ENCODE measurements at regions of chr20 and their contacts with region 1.

Region 1: GRCh38 chr20:49132995-49133478 is 55.1 kb downstream of the STAU1 start:
- DNase-seq: no peak
- H3K4me3 ChIP-seq: no peak overlapping the region
- H3K27ac ChIP-seq: peak overlapping the region; percentile 42
- H3K4me1 ChIP-seq: peaks cover 6% of the 10 kb centered on the region
- H3K27me3 ChIP-seq: no peaks in the 10 kb centered on the region
- CTCF ChIP-seq: peak in 2 of 3 experiments; percentile 40 to 72
- POLR2A ChIP-seq: no peak

Region 2: DNA sequence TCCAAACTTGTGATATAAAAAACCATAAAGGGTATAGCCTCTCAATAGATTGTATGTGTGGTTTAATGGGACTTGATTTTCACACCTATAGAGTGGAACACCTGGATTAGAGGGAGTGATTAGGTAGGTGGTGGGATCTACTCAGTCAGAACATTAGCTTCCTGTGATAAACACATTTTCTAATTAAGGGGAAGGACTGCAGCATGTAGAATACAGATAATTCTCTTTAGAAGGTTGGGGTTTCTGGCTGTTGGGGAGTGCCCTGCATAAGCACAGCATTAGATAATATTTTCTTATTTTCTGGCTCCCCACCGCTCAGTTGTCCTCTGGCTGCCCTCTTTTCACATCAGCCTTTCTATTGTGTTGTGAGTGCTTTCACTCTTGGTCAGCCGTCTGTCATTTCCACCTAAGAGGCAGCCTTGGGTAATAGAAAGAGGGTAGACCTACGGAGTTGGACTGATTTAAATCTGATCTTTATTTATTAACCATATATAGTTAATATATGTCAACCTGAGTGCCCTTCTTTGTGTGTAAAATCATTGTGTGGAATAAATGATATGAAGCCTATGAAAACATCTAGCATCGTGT is 78.9 kb before region 1 on chr20:
- intact Hi-C with region 1: no loop called
- DNase-seq: no peak
- H3K4me3 ChIP-seq: no peak overlapping the region
- H3K27ac ChIP-seq: no peak overlapping the region
- H3K4me1 ChIP-seq: peaks cover 30% of the 10 kb centered on the region
- H3K27me3 ChIP-seq: no peaks in the 10 kb centered on the region
- CTCF ChIP-seq: no peak
- POLR2A ChIP-seq: no peak

Region 3: DNA sequence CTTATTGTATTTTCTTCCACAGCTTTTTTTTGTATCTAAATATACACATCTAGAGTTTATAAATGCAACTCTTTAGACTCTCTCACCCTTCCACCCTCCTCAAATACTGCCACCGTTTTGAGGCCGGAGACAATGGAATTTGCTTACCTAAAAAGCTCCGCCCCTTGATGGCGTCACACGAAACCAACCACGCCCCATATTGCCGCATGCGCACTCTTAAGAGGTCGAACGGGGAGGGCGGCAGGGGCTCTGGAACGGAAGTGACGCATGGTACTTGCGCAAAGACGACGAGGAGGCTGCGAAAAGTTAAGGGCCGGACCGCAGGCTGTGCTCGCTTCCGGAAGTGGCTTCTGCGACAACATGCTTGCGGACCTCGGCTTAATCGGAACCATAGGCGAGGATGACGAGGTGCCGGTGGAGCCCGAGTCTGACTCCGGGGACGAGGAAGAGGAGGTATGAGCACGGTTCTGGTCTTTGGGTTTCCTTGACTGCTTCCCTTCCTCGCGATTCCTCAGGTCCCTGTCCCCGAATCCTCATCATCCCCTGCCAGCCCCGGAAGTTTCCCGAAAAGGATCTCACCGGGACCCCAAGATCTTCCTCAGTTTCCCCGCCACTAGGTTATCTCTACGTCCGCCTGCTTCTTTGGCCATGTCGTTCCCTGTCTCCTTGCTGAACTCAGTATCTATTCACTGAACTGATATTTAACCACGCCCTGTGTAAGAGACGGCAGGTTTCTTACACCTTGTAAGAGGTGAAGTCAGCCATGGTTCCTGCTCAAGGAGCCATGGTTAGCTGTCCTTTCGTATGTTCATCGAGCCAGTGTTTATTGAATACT is 86.3 kb after region 1 on chr20 and contains the start of gene DDX27:
- intact Hi-C with region 1: loop called (anchors 2 kb)
- DNase-seq: peak; percentile 98 to 99
- H3K4me3 ChIP-seq: peak within 1 kb of the TSS; percentile 76 to 78
- H3K27ac ChIP-seq: peak within 1 kb of the TSS; percentile 82
- H3K4me1 ChIP-seq: peaks cover 27% of the 10 kb centered on the region
- H3K27me3 ChIP-seq: no peaks in the 10 kb centered on the region
- CTCF ChIP-seq: no peak
- POLR2A ChIP-seq: peak; percentile 49 to 86
- total RNA-seq, gene DDX27: 23.3 TPM

Measured in vagina (tissue), 2 donors.